Naive thymus-derived CD4-positive, alpha-beta T cell (primary cell): ENCODE measurements at regions of chr9 and their contacts with region 1.

Region 1: GRCh38 chr9:33737811-33738606 is 57.4 kb upstream of the PRSS3 start:
- DNase-seq: no peak
- ATAC-seq: peak; percentile 47
- H3K4me3 ChIP-seq: no peak overlapping the region
- H3K4me3 Mint-ChIP-seq: no peak overlapping the region
- H3K27ac ChIP-seq: no peak overlapping the region
- H3K27ac Mint-ChIP-seq: no peak overlapping the region
- H3K4me1 ChIP-seq: no peaks in the 10 kb centered on the region
- H3K4me1 Mint-ChIP-seq: peaks cover 0 to 3% (median 0%) of the 10 kb centered on the region in 7 donors
- H3K27me3 ChIP-seq: no peaks in the 10 kb centered on the region
- H3K27me3 Mint-ChIP-seq: peaks cover 25 to 45% (median 35%) of the 10 kb centered on the region in 5 donors

Region 2: GRCh38 chr9:33778700-33779351 is 40.8 kb after region 1 on chr9:
- CTCF ChIA-PET with region 1: no interaction called
- POLR2A ChIA-PET with region 1: no interaction called
- intact Hi-C with region 1: loop called in 1 of 2 experiments (anchors 1 kb)
- DNase-seq: peak; percentile 11 to 61 (median 49)
- ATAC-seq: peak; percentile 87
- H3K4me3 ChIP-seq: no peak overlapping the region
- H3K4me3 Mint-ChIP-seq: no peak overlapping the region
- H3K27ac ChIP-seq: no peak overlapping the region
- H3K27ac Mint-ChIP-seq: no peak overlapping the region
- H3K4me1 ChIP-seq: no peaks in the 10 kb centered on the region
- H3K4me1 Mint-ChIP-seq: peaks cover 0 to 7% (median 0%) of the 10 kb centered on the region in 7 donors
- H3K27me3 ChIP-seq: no peaks in the 10 kb centered on the region
- H3K27me3 Mint-ChIP-seq: peaks cover under 1 to 34% (median 5%) of the 10 kb centered on the region in 5 donors